HepG2 (cell line): ENCODE measurements at regions of chr12 and their contacts with region 1.

Region 1: DNA sequence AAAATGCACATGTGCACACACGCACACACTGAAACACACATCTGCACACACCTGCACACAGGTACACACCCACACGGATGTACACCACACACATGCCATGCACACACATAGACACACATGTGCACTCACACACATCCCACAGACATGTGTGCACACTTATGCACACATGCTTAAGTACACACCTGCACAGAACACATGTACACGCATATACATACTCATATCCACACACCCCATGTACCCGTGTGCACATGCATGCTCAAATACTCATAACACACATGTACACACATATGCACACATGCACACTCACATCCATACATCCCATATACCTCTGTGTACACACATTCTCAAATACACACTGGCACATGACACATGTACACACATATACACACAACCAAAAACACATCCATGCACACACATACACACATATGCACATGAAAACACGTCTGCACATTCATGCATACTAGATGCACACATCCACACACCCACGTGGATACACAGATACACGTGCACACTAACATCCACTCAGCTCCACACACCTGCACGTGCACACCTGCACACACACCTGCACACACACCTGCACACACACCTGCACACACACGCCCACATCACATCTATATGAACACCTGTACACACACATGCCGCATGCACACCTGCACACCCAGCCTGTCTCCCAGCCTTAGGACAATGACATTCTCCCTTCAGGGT is 336.7 kb downstream of the ADGRD1 start:
- DNase-seq: no peak
- ATAC-seq: no peak
- H3K4me3 ChIP-seq: no peak overlapping the region
- H3K27ac ChIP-seq: no peak overlapping the region
- H3K4me1 ChIP-seq: no peaks in the 10 kb centered on the region
- H3K27me3 ChIP-seq: peaks cover 0 to 1% of the 10 kb centered on the region in 2 experiments; a peak in 3 of 5 replicates
- CTCF ChIP-seq: no peak
- EP300 ChIP-seq: no peak
- POLR2A ChIP-seq: no peak
- RAD21 ChIP-seq: no peak

Region 2: DNA sequence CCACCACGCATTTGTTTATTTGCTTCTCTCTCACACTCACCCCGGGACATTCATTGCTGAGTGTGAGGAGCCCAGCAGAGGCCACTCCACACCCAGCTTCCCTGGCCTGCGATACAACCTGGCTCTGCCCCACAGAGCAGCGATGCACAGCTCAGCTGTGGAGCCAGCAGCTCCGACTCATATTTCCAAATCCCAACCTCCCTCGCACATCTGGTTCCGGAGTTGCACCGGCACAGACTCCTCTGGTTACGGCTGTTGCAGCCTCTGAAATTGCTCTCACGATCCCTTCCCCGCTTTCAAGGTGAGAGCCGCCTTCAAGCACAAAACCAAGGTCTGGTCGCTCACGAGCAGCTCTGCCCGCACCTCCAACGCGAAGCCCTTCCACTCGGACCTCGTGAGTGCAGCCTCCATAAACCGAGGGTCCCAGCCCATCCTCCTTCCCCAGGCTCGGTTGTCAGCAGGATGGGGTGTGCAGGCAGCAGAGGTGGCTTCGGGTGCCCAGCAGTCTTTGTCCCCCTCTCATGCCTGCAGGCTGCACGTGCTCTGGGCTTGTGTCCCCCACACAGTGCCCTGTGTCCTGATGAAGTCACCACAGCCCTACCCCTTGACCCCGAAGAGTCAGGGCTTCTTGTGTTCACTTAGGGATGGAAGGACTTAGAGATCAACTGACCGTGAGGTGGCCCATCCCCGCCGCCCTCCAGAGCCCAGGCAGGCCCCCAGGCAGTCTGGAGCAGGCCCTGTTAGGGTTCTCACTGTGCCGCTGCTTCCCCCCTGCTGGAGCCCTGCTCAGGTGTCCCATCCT is 152.4 kb before region 1 on chr12:
- CTCF ChIA-PET with region 1: no interaction called
- POLR2A ChIA-PET with region 1: no interaction called
- in situ Hi-C with region 1: no loop called
- intact Hi-C with region 1: no loop called
- DNase-seq: no peak
- ATAC-seq: no peak
- H3K4me3 ChIP-seq: no peak overlapping the region
- H3K27ac ChIP-seq: no peak overlapping the region
- H3K4me1 ChIP-seq: no peaks in the 10 kb centered on the region
- H3K27me3 ChIP-seq: no peaks in the 10 kb centered on the region
- CTCF ChIP-seq: 0 out of 2 replicates have a peak, but pooled peaks have one; percentile 4
- EP300 ChIP-seq: no peak
- POLR2A ChIP-seq: no peak
- RAD21 ChIP-seq: no peak

Region 3: DNA sequence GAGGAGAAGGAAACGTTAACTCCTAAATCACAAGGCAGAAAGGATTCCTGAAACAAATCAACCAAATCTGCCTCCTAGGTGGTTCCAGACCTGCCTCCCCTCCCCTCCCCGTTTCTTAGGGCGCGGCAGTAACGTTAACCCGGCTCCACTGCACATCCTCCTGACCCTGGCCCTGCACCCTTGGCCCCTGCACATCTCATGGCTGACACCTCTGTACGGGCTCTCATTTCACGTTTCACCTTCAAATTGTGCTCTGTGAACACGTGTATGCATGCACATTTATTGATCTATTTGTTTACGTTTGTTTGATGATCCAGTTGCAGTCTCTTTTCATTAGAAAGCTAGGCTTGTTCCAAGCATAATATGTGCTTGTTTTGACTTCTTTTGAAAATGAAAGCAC is 21.4 kb after region 1 on chr12:
- CTCF ChIA-PET with region 1: no interaction called
- POLR2A ChIA-PET with region 1: no interaction called
- in situ Hi-C with region 1: no loop called
- intact Hi-C with region 1: no loop called
- DNase-seq: no peak
- ATAC-seq: no peak
- H3K4me3 ChIP-seq: no peak overlapping the region
- H3K27ac ChIP-seq: no peak overlapping the region
- H3K4me1 ChIP-seq: no peaks in the 10 kb centered on the region
- H3K27me3 ChIP-seq: peaks cover 0 to 5% of the 10 kb centered on the region in 2 experiments; a peak in 1 of 5 replicates
- CTCF ChIP-seq: no peak
- EP300 ChIP-seq: no peak
- POLR2A ChIP-seq: no peak
- RAD21 ChIP-seq: no peak

Region 4: DNA sequence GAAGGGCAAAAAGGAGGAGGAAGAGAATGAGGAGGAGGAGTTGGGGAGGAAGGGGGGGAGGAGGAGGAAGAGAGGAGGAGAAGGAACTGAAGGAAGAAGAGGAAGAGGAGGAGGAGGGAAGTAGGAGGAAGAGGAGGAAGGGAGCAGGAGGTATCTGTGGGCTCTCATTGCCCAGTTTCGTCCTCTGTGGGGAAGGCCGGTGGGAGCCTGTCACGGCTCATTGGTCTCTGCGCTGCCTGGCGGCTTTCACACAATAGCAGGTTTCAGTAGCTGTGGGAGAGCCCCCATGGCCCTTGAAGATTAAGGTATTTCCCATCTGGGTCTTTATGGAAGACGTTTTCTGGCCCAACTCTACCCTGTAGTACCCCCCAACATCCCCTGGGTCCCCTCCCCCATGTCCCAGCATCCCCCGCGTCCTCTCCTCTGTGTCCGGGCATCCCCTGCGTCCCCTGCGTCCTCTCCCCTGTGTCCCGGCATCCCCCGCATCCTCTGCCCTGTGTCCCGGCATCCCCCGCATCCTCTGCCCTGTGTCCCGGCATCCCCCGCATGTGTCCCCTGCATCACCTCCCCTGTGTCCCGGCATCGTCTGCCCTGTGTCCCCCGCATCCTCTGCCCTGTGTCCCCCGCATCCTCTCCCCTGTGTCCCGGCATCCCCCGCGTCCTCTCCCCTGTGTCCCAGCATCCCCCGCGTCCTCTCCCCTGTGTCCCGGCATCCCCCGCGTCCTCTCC is 142.3 kb after region 1 on chr12:
- CTCF ChIA-PET with region 1: no interaction called
- POLR2A ChIA-PET with region 1: no interaction called
- in situ Hi-C with region 1: no loop called
- intact Hi-C with region 1: no loop called
- DNase-seq: no peak
- ATAC-seq: no peak
- H3K4me3 ChIP-seq: no peak overlapping the region
- H3K27ac ChIP-seq: no peak overlapping the region
- H3K4me1 ChIP-seq: no peaks in the 10 kb centered on the region
- H3K27me3 ChIP-seq: 0 out of 5 replicates have a peak, but pooled peaks cover 0 to 4% of the 10 kb centered on the region in 2 experiments
- CTCF ChIP-seq: no peak
- EP300 ChIP-seq: no peak
- POLR2A ChIP-seq: no peak
- RAD21 ChIP-seq: no peak

Region 5: DNA sequence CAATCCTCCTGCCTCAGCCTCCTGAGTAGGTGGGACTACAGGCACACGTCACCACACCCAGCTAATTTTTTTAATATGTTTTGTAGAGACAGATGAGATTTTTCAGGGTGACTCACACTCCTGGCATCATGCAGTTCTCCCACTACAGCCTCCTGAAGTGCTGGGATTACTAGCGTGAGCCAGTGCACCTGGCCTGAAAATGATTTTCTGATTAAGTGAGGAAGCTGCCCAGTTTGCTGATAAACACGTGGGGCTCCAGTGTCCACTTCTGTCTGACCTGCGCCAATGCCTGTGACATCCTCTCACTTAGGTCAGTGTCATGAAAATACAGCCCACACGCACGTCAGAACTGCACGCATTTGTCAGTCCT is 383.5 kb after region 1 on chr12:
- CTCF ChIA-PET with region 1: no interaction called
- POLR2A ChIA-PET with region 1: no interaction called
- in situ Hi-C with region 1: loop called (anchors 10 kb)
- intact Hi-C with region 1: no loop called
- DNase-seq: no peak
- ATAC-seq: no peak
- H3K4me3 ChIP-seq: no peak overlapping the region
- H3K27ac ChIP-seq: no peak overlapping the region
- H3K4me1 ChIP-seq: no peaks in the 10 kb centered on the region
- H3K27me3 ChIP-seq: peaks cover 7 to 48% of the 10 kb centered on the region in 2 experiments
- CTCF ChIP-seq: no peak
- EP300 ChIP-seq: no peak
- POLR2A ChIP-seq: no peak
- RAD21 ChIP-seq: no peak